AG04449 (cell line): ENCODE measurements at regions of chr5 and their contacts with region 1.

Region 1: GRCh38 chr5:163473635-163474243 is 13.3 kb downstream of the HMMR start:
- DNase-seq: no peak
- H3K4me3 ChIP-seq: no peak overlapping the region
- CTCF ChIP-seq: no peak

Region 2: DNA sequence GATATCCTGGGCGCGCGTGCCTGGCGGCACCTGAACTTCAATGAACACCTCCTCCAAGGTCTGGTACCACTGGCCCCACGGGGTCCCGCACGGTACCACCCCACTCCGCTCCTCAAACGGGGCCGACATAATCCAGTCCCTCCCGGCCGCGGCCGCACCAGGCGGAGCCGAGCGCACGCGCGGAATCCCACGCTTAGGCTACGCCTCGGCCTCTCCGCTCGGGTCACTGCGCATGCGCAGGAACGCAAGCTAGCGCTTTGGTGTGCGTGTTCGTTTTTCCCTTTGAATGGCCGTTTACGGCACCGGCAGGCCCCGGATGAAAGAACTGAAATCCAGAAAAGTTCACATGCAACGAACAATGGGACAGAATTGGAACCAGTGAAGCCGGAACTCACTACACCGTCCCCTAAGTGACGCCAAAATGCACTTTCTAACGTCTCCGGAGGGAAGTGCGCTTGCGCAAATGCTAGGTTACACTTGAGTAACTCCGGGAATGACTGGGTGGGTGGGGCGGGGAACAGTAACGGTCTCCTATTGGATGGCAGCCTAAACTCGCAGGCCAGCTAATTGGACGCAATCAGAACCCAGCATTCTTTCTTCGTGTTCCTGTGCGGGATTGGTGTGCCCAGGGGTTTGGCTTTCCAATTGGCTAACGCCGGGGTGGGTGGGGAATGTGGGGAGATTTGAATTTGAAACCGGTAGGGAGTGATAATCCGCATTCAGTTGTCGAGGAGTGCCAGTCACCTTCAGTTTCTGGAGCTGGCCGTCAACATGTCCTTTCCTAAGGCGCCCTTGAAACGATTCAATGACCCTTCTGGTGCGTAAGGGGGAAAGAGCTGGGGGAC is 13.6 kb before region 1 on chr5 and contains the starts of genes HMMR and NUDCD2:
- CTCF ChIA-PET with region 1: interaction called, 40 read pairs
- POLR2A ChIA-PET with region 1: no interaction called
- DNase-seq: peak; percentile 94
- H3K4me3 ChIP-seq: peak within 1 kb of the TSS; percentile 80
- CTCF ChIP-seq: no peak

Region 3: GRCh38 chr5:163489055-163489744 is 15.5 kb after region 1 on chr5:
- CTCF ChIA-PET with region 1: interaction called, 11 read pairs
- POLR2A ChIA-PET with region 1: no interaction called
- DNase-seq: no peak
- H3K4me3 ChIP-seq: no peak overlapping the region
- CTCF ChIP-seq: peak; percentile 29

Region 4: GRCh38 chr5:163505368-163506094 is 31.8 kb after region 1 on chr5 and contains the start of gene MAT2B:
- CTCF ChIA-PET with region 1: interaction called, 12 read pairs
- POLR2A ChIA-PET with region 1: no interaction called
- DNase-seq: no peak
- H3K4me3 ChIP-seq: peak within 1 kb of the TSS; percentile 78
- CTCF ChIP-seq: peak; percentile 65